Activated B cell treated with CpG ODN at 0.5 μM for 24 hours (primary cell): ENCODE measurements at regions of chr9 and their contacts with region 1.

Region 1: GRCh38 chr9:89919169-89919681 is 314.4 kb downstream of the GADD45G start:
- DNase-seq: no peak
- ATAC-seq: peak; percentile 82
- H3K4me3 Mint-ChIP-seq: no peak overlapping the region
- H3K27ac Mint-ChIP-seq: no peak overlapping the region
- H3K4me1 Mint-ChIP-seq: peaks cover 8% of the 10 kb centered on the region
- H3K27me3 Mint-ChIP-seq: peaks cover 3% of the 10 kb centered on the region
- CTCF ChIP-seq: no peak

Region 2: DNA sequence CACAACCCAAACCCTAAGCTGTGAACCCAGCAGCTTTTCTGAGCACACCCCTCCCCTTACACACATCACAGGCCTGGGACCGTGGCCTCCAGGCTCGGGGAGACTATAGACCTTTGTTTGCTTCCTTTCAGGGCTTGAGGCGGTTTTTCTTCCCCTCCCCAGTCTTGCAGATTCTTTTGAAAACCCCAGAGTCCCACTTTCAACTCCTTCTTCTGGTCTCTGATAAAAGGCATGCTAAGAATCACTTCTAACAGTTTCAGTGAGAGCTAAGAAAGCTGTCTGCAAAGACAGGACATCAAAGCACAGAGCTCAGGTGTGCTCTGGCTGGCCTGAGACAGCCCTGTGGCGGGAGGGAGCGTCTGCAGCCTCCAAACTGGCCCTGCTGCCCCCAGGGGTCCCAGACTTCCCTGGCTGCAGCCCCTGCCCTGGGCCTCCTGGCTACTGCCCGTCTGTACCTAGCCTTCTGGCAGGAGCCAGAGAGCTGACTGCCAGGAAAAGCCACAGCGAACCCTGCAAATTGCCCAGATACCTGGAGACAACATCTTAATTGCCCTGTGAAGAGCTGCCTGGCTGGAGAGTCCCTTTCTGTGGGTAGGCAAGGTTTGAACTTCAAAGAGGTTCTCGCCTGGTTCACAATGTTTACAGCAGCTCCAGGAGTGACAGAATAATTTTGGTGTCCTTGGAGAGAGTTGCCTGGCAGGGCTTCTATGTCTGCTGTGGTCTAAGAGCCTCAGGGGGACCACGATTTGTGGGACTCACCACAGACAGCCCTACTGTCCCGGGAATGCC is 175.5 kb before region 1 on chr9:
- CTCF ChIA-PET with region 1: no interaction called
- POLR2A ChIA-PET with region 1: no interaction called
- intact Hi-C with region 1: loop called (anchors 10 kb)
- DNase-seq: no peak
- ATAC-seq: peak; percentile 15
- H3K4me3 Mint-ChIP-seq: no peak overlapping the region
- H3K27ac Mint-ChIP-seq: peak overlapping the region; percentile 65
- H3K4me1 Mint-ChIP-seq: peaks cover 60% of the 10 kb centered on the region
- H3K27me3 Mint-ChIP-seq: no peaks in the 10 kb centered on the region
- CTCF ChIP-seq: no peak

Region 3: DNA sequence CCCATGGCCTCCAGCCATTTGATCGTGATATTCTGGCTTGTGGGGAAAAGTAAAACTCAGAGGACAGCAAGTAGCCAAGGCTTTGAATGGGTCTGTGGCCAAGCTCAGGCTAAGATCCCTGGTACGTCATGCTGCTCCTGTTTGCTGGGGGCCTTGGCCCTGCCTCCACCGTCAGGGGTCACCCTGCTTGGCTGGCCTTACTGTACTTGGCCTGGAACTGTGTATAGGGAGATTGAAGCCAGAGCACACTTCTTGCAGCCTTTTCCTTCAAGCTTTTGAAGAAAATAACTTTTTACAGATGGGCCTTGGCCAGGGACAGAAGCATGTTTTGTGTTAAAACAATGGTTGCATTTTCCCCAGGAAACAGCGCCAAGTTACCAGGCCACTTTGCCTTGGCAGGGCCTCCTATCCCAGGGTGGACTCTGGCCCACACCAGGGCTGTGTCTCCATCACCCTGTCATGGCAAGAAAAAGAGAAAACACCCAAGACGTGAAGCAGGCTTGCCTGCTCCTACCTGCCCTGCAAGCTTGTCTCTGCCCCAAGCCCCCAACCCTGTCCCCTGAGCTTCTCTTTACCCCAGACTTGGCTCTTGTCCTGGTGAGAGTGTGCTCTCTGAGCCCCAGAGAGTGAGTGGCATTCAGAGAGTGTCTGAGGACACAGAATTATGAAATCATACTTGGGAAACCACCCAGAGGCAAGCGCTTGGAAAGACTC is 27.5 kb before region 1 on chr9:
- CTCF ChIA-PET with region 1: no interaction called
- POLR2A ChIA-PET with region 1: no interaction called
- intact Hi-C with region 1: no loop called
- DNase-seq: no peak
- ATAC-seq: no peak
- H3K4me3 Mint-ChIP-seq: no peak overlapping the region
- H3K27ac Mint-ChIP-seq: no peak overlapping the region
- H3K4me1 Mint-ChIP-seq: peaks cover 3% of the 10 kb centered on the region
- H3K27me3 Mint-ChIP-seq: no peaks in the 10 kb centered on the region
- CTCF ChIP-seq: no peak